Heart right ventricle (tissue), 16 donors: ENCODE measurements at regions of chr19 and their contacts with region 1.

Region 1: DNA sequence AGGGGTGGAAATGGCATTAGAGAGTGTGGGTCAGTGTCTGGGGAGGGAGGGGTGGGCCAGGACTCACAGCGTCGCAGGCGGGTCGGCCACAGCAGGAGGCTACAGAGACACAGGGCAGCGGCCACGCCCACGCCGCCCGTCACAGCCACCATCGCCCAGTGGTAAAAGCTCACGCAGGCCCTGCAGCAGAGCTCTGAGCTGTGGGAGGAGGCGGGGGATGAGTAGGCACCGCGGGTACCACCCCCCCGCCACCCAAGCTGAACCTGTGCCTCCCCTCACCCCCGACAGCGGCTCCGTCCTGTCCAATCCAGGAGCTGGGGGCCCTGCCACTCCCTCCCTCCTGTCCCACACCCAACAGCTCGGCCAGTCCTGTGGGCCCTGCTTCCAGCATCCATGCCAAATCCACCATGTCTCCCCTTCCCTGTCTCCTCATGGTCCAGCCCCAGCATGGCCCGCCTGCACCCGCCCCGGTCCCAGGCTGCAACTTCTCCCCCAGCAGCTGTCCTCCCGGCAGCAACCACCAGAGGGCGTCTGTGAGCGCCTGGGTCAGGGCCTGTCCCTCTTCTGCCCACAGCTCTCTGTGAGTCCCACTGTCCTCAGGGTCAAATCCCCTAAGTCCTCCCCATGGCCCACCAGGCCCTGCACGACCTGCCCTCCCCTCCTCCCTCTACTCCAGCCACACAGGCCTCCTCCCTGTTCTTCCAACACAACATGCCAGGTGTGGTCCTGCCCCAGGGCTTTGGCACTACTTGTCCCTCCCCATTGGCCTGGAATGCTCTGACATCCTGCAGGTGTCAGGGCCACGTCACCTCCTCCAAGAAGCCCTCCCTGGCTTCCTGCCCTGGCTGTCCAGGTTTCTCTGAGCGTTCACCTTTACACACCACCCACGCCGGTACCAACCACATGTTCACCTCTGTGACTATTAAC is 6.0 kb downstream of the TEKTIP1 start:
- DNase-seq: peak; percentile 64 to 83
- ATAC-seq: peak; percentile 51 to 72 (median 68)
- H3K4me3 ChIP-seq: no peak overlapping the region
- H3K27ac ChIP-seq: no peak overlapping the region
- H3K4me1 ChIP-seq: peaks cover 0 to 17% (median 0%) of the 10 kb centered on the region in 9 donors
- H3K27me3 ChIP-seq: no peaks in the 10 kb centered on the region
- CTCF ChIP-seq: peak; percentile 87 to 98 (median 92)

Region 2: DNA sequence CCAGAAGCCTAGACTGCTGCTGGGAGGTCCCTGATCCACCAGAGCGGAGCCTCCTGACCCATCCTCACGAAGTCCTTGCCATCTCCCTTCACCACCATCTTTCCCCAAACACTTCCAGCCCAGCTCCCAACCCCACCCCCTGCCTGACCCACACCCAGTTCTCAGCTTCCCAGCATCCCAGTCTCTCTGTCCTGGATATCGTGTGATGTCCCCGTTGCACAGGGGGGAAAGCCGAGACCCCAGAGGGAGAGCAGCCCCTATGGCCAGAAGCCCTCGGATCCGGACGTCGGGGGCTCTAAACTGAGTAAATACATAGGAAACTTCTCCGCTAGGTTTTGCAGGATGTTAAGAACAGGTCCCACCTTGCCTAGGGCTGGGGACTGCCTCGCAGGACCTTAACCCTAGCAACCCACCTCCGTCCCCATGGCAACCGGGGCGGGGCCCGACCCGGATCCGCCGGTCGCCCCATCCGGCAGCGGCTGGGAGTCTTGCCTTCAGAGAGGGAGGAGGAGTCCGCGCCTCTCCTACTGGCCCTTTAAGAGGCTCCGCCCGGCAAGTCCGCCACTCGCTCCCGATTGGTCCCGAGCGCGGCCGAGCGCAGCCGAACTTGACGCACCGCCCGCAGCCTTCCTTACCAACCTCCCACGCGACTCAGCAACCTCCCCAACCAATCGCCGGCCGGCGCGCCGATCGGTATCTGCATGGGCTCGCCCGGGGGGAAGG is 27.3 kb after region 1 on chr19:
- intact Hi-C with region 1: no loop called
- DNase-seq: peak; percentile 100
- ATAC-seq: peak; percentile 96 to 99 (median 98)
- H3K4me3 ChIP-seq: peak overlapping the region; percentile 59 to 100 (median 96)
- H3K27ac ChIP-seq: peak overlapping the region in 6 of 10 donors; percentile 37 to 84 (median 60)
- H3K4me1 ChIP-seq: peaks cover 10 to 40% (median 26%) of the 10 kb centered on the region in 9 donors
- H3K27me3 ChIP-seq: no peaks in the 10 kb centered on the region
- CTCF ChIP-seq: no peak

Region 3: DNA sequence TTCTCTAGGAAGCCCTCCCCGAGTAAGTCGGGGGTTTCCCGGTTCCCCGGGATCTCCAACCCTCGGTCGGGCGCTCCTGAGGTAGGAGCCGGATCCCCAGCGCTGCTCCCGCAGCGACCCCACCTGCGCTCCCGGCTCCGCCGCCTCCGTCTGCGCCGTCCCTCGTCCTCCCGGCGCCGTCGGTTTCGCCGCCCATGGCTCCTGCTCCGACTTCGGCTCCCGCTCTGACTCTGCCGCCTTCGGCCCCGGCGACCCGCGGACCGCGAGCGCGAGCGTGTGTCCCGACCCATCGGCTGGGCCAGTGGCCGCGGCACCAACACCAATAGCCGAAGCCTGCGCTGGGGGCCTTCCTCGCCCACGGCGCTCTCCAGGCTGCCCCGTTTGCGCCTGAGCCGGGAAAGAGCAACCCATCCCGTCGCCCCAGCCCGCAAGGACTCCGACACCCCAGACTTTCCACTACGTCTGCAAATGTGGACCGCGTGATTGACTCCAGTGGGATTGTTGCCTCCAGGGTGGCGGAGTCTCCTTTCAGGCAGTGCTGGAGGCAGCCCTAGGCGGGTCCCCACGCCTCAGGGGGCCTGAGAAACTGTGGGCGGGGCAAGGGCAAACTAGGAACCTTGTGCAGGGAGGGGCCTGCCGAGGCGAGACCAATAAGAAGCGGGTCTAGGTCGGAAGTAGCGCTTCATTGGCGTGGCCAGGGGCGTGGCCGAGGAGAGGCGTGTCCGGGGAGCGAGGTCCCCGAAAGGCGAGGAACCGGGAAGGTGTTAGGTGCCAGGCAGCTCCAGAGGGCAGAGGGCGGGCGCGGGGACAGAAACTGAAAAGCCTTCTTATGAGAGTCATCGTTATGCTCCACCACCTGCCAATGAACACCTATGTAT is 81.7 kb after region 1 on chr19 and contains the start of gene CACTIN:
- intact Hi-C with region 1: loop called in 1 of 10 experiments (anchors 5 kb)
- DNase-seq: peak; percentile 99
- ATAC-seq: peak; percentile 97 to 99 (median 99)
- H3K4me3 ChIP-seq: peak within 1 kb of the TSS; percentile 64 to 100 (median 90)
- H3K27ac ChIP-seq: peak within 1 kb of the TSS; percentile 85 to 98 (median 95)
- H3K4me1 ChIP-seq: peaks cover 11 to 27% (median 19%) of the 10 kb centered on the region in 9 donors
- H3K27me3 ChIP-seq: no peaks in the 10 kb centered on the region
- CTCF ChIP-seq: peak in 3 of 9 donors; percentile 3 to 19 (median 12)
- total RNA-seq, gene CACTIN: 9.7 to 15.8 (median 12.1) TPM

Region 4: DNA sequence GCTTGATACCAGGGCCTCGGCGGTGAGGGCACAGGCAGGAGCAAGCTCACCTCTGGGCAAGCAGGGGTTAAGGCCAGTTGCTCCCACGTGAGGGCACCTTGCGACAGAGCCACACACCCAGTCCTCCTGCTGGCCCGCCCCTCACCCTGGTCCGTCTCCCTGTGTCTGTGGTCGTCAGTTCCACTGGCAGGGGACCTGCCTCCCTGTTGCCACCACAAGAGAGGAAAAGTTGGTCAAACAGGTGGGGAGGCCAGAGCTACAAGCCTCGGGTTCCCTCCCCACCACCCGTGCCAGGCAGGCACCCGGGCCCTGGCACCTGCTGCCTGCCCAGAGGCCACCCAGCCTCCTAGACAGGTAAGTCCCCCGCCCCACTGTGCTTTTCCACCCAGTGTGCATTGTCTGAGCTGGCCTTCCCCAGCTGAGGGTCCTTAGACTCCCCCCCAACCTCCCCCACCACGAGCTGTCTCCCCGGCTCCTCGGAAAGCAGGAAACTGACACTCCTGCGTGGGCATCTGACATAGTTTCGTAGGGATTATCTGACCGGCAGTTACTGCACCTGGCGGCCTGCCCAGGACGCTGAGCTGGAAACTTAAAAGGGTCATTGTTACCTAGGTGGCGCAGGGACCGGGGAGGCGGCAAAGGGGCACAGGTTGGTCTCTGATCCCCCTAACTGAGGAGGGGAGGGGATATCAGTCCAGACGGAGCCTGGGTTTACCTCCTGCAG is 163.4 kb after region 1 on chr19 and contains the start of gene TJP3:
- intact Hi-C with region 1: loop called in 7 of 10 experiments (anchors 5 to 10 kb)
- DNase-seq: peak in 1 of 2 donors; percentile 45
- ATAC-seq: peak in 4 of 8 donors; percentile 16 to 54 (median 30)
- H3K4me3 ChIP-seq: no peak within 1 kb of the TSS
- H3K27ac ChIP-seq: no peak within 1 kb of the TSS
- H3K4me1 ChIP-seq: peaks cover 0 to 13% (median 6%) of the 10 kb centered on the region in 9 donors
- H3K27me3 ChIP-seq: peaks cover 0 to 17% (median 14%) of the 10 kb centered on the region in 7 donors
- CTCF ChIP-seq: no peak
- total RNA-seq, gene TJP3: 0.15 to 0.49 (median 0.34) TPM in 3 of 10 donors, not detected in the others